IMR-90 (cell line): ENCODE measurements at regions of chr11 and their contacts with region 1.

Region 1: DNA sequence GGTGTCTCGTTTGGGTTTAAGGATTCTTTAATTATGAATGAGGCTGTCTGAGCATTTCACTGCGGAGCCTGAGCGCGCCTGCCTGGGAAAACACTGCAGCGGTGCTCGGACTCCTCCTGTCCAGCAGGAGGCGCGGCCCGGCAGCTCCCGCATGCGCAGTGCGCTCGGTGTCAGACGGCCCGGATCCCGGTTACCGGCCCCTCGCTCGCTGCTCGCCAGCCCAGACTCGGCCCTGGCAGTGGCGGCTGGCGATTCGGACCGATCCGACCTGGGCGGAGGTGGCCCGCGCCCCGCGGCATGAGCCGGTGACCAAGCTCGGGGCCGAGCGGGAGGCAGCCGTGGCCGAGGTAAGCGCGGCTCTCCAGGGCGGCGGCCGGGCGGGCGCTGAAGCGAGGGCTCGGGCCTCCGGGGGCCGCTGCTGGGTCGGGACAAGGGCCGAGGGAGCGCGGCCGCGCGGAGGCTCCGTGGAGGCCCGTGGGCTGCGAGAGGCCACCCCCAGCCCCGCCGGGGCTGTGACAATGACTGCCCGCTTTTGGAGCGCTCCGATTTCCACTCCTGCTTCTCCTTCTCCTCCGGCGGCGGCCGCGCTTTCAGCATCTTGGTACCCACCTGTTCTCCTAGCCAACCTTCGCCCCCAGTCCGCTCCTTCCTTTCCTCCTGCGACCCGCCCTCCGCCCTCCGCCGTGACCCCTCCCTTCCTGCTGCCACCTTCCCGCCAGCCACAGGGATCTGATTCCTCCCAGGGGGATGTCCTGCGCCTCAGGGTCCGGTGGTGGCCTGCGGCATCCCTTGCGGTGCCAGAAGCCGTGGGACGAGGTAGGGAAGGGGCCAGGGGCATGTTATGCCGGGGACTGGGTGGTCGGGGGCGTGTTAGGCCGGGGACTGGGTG is at the start of gene EXT2:
- DNase-seq: peak; percentile 76
- ATAC-seq: peak; percentile 95
- H3K4me3 ChIP-seq: peak within 1 kb of the TSS; percentile 97
- H3K27ac ChIP-seq: peak within 1 kb of the TSS; percentile 72
- H3K4me1 ChIP-seq: 0 out of 2 replicates have a peak, but pooled peaks cover 3% of the 10 kb centered on the region
- H3K27me3 ChIP-seq: peaks cover 2% of the 10 kb centered on the region; the same call in 1 of the 2 replicates
- CTCF ChIP-seq: peak; percentile 93
- POLR2A ChIP-seq: no peak
- RAD21 ChIP-seq: peak; percentile 20; the same call in 1 of the 2 replicates
- total RNA-seq, gene EXT2: 66.1 and 85.3 TPM in 2 replicates

Region 2: DNA sequence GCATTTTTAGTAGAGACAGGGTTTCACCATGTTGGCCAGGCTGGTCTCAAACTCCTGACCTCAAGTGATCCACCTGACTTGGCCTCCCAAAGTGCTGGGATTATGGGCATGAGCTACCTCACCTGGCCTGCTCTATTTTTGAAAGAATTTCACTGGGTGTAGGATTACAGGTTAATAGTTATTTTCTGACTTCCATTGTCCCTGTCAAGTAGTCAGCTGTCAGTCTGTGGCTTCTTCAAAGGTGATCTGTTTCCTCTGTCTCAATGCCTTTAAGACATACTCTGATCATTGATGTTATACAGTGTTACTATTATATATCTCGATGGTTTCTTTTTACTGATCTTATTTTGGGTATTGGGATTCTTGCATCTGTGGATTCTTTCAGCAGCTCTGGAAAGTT is 10.4 kb before region 1 on chr11:
- CTCF ChIA-PET with region 1: interaction called, 13 read pairs
- POLR2A ChIA-PET with region 1: no interaction called
- dilution Hi-C with region 1: no loop called
- in situ Hi-C with region 1: no loop called
- intact Hi-C with region 1: no loop called
- DNase-seq: no peak
- ATAC-seq: no peak
- H3K4me3 ChIP-seq: no peak overlapping the region
- H3K27ac ChIP-seq: no peak overlapping the region
- H3K4me1 ChIP-seq: no peaks in the 10 kb centered on the region
- H3K27me3 ChIP-seq: no peaks in the 10 kb centered on the region; the same call in 1 of the 2 replicates
- CTCF ChIP-seq: no peak
- POLR2A ChIP-seq: no peak
- RAD21 ChIP-seq: no peak

Region 3: DNA sequence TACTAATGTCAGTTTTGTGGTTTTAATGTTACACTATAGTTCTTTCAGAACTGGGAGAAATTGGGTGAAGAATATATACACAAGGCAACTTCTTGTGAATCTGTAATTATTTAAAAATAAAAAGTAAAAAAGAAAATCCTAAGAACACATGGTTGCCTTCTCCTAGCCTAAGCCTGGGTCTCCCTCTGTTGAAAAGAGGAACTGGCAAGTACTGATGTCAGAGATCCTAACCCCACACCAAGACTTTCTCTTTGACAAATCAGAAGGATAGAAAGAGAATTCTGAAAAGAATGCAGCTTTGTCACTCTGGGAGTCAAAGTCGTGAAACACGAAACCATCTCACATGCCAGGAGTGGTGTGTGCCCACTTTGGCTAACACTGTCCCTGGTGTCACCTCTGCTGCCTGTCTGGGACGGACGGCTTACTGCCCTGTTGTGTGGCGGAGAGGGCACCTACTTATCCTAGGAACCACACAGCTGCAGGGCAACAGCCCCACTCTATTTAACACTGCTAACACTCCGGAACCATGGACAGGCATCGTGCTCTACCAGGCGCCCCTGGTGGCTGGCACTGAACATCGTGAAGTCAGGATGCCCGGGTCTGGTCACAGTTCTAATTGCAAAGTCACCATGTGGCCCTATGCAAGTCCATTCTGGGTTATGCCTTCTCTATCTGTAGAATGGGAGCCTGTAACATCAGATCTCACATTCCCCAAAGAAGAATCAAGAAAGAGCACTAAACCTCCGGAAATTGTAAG is 361.0 kb after region 1 on chr11:
- CTCF ChIA-PET with region 1: no interaction called
- POLR2A ChIA-PET with region 1: no interaction called
- dilution Hi-C with region 1: no loop called
- in situ Hi-C with region 1: no loop called
- intact Hi-C with region 1: no loop called
- DNase-seq: no peak
- ATAC-seq: no peak
- H3K4me3 ChIP-seq: no peak overlapping the region
- H3K27ac ChIP-seq: no peak overlapping the region
- H3K4me1 ChIP-seq: no peaks in the 10 kb centered on the region
- H3K27me3 ChIP-seq: peaks cover 3% of the 10 kb centered on the region
- CTCF ChIP-seq: 0 out of 2 replicates have a peak, but pooled peaks have one; percentile 16
- POLR2A ChIP-seq: no peak
- RAD21 ChIP-seq: no peak

Region 4: GRCh38 chr11:44611687-44612434 is 516.1 kb after region 1 on chr11:
- CTCF ChIA-PET with region 1: no interaction called
- POLR2A ChIA-PET with region 1: no interaction called
- dilution Hi-C with region 1: no loop called
- in situ Hi-C with region 1: no loop called
- intact Hi-C with region 1: loop called (anchors 10 kb)
- DNase-seq: no peak
- ATAC-seq: no peak
- H3K4me3 ChIP-seq: no peak overlapping the region
- H3K27ac ChIP-seq: no peak overlapping the region
- H3K4me1 ChIP-seq: peaks cover 22% of the 10 kb centered on the region
- H3K27me3 ChIP-seq: no peaks in the 10 kb centered on the region
- CTCF ChIP-seq: no peak
- POLR2A ChIP-seq: no peak
- RAD21 ChIP-seq: no peak